Activated CD8-positive, alpha-beta T cell treated with anti-CD3 and anti-CD28 coated beads for 36 hours (primary cell): ENCODE measurements at regions of chr17 and their contacts with region 1.

Region 1: GRCh38 chr17:12040478-12040877 is 19.8 kb downstream of the MAP2K4 start:
- DNase-seq: no peak
- ATAC-seq: no peak
- H3K4me3 Mint-ChIP-seq: no peak overlapping the region
- H3K27ac Mint-ChIP-seq: no peak overlapping the region
- H3K4me1 Mint-ChIP-seq: peaks cover 65% of the 10 kb centered on the region
- H3K27me3 Mint-ChIP-seq: no peaks in the 10 kb centered on the region
- CTCF ChIP-seq: no peak

Region 2: DNA sequence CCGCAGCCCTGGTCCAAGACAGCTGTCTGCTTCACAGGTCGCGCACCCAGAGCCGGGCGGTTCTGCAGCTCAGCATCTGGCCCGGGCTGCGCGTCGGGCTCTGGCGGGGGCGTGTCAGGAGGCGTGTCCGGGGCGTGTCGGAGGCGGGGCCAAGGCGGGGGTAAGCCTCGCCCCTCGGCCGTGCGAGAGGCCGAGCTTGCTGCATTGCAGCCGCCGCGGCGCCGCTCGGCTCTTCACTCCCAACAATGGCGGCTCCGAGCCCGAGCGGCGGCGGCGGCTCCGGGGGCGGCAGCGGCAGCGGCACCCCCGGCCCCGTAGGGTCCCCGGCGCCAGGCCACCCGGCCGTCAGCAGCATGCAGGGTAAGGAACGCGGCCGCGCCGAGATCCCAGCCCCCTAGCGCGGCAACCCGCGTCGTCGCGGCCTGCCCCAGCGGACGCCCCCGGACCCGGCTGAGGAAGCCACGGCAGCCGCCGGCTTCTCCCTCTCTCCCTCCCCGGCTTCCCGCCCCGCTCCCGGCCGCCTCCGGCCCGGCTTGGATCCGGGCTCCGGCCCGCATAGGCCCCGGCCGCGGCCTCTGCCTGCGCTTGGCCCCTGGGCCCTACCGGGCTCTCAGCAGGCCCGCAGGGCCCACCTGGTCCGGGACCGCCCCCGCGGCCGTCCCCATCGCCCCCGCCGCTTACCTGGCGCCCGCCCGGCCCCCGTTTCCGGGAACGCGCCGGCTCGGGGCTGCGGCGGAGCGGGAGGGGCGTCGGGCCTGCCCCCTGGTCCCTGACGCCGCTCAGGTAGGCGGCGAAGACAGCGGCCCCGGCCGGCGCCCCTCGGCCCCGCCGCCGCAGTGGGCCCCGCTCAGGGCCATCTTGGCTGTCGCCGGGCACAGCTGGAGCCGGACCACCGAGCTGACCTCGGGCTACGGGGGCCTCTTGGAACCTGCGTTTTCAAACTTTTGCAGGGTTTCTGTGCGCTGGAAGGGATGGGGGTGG is 19.5 kb before region 1 on chr17 and contains the start of gene MAP2K4:
- CTCF ChIA-PET with region 1: interaction called, 12 read pairs
- POLR2A ChIA-PET with region 1: interaction called, 6 read pairs
- intact Hi-C with region 1: no loop called
- DNase-seq: peak; percentile 90
- ATAC-seq: peak; percentile 96
- H3K4me3 Mint-ChIP-seq: peak within 1 kb of the TSS; percentile 80
- H3K27ac Mint-ChIP-seq: peak within 1 kb of the TSS; percentile 77
- H3K4me1 Mint-ChIP-seq: peaks cover 42% of the 10 kb centered on the region
- H3K27me3 Mint-ChIP-seq: no peaks in the 10 kb centered on the region
- CTCF ChIP-seq: no peak
- total RNA-seq, gene MAP2K4: 45.6 to 49.0 TPM